ENCODE measurements at regions of chrX and their contacts with region 1.

Region 1: GRCh38 chrX:12946838-12947544 is 27.9 kb upstream of the TMSB4X start:
- DNase-seq: peak; percentile 92
- H3K4me3 Mint-ChIP-seq: peak overlapping the region; percentile 66
- H3K27ac Mint-ChIP-seq: peak overlapping the region; percentile 96
- H3K4me1 Mint-ChIP-seq: peaks cover 48% of the 10 kb centered on the region
- H3K27me3 Mint-ChIP-seq: no peaks in the 10 kb centered on the region

Region 2: DNA sequence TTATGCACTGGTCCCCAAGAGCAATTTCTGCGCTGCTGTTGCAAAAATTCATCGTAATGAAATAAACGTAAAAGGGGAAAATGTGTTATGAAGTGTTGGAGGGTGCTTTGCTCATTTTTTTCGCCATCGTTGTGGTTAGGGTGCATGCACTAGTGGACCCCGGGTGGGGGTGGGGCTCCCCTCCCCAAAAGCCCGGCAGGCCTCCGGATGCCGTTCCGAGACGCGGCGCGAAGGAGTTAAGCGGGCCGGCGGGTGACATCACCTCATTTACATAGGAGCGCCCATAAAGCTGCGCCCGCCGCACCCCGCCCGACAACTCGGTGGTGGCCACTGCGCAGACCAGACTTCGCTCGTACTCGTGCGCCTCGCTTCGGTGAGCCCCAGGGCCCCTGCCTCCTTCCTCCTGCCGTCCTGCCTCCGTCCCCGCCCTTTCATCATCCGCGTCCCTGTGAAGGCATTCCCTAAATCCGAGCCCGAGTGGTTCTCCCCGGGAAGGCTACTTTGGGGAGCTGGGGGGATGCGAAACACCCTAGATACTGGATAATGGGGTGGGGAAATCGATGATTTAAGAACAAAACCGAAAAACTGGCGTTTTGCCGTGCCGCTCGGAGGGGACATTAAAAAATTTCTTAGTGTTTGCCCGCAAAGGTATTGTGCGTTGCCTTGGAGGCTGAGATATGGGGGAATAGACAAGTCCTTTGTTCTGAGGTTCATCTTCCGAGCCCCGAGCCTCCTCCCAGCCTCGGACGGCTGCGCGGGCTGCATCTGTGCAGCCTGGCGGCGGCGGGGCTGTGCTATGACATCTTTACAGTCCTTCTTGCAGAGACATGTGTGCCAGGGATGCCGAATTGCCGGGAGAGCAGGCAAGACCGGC is 28.0 kb after region 1 on chrX and contains the start of gene TMSB4X:
- intact Hi-C with region 1: loop called (anchors 1 kb)
- DNase-seq: peak; percentile 96
- H3K4me3 Mint-ChIP-seq: peak within 1 kb of the TSS; percentile 97
- H3K27ac Mint-ChIP-seq: peak within 1 kb of the TSS; percentile 98
- H3K4me1 Mint-ChIP-seq: peaks cover 32% of the 10 kb centered on the region
- H3K27me3 Mint-ChIP-seq: no peaks in the 10 kb centered on the region
- total RNA-seq, gene TMSB4X: 5,263 and 5,311 TPM in 2 replicates

Region 3: GRCh38 chrX:13000301-13000811 is 53.4 kb after region 1 on chrX:
- intact Hi-C with region 1: loop called (anchors 2 kb)
- DNase-seq: peak; percentile 78
- H3K4me3 Mint-ChIP-seq: peak overlapping the region; percentile 75
- H3K27ac Mint-ChIP-seq: peak overlapping the region; percentile 95
- H3K4me1 Mint-ChIP-seq: peaks cover 55% of the 10 kb centered on the region
- H3K27me3 Mint-ChIP-seq: no peaks in the 10 kb centered on the region

Region 4: GRCh38 chrX:13220916-13221315 is 273.9 kb after region 1 on chrX:
- intact Hi-C with region 1: no loop called
- DNase-seq: no peak
- H3K4me3 Mint-ChIP-seq: no peak overlapping the region
- H3K27ac Mint-ChIP-seq: no peak overlapping the region
- H3K4me1 Mint-ChIP-seq: peaks cover 7% of the 10 kb centered on the region
- H3K27me3 Mint-ChIP-seq: peaks cover 4% of the 10 kb centered on the region

Region 5: DNA sequence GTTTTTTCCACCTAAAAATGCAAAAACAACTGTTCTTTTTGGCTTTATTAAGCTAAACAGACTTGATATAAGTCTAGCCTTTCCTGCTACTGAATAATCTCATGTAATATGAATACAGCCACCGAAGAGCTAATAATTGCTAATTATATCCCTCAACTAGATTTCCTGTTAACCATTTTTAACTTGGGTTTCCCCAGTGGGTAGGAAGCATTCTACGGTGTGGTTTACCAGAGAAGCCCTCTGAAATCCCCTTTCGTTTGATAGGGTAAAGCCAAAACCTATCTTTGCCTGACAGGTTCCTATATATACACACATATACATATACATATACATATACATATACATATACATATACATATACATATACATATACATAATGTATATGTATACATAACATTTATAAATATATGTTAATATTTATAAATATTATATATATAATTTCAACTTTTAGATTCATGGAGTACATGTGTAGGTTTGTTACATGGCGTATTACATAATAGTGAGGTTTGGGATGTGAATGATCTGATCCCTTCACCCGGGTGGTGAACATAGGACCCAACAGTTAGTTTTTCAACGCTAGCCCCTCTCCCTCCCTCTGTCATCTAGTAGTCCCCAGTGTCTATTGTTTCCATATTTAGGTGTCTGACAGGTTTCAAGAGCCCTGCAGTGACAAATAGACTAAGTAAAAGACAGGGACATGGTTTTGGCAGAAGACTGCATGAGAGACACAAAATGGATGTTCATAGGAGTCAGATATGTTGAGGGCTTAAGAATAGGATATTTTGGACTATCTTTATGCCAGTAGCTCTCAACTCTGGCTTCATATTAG is 310.4 kb after region 1 on chrX:
- intact Hi-C with region 1: loop called (anchors 1 kb)
- DNase-seq: peak; percentile 60
- H3K4me3 Mint-ChIP-seq: peak overlapping the region; percentile 40
- H3K27ac Mint-ChIP-seq: peak overlapping the region; percentile 53
- H3K4me1 Mint-ChIP-seq: peaks cover 39% of the 10 kb centered on the region
- H3K27me3 Mint-ChIP-seq: no peaks in the 10 kb centered on the region

Region 6: DNA sequence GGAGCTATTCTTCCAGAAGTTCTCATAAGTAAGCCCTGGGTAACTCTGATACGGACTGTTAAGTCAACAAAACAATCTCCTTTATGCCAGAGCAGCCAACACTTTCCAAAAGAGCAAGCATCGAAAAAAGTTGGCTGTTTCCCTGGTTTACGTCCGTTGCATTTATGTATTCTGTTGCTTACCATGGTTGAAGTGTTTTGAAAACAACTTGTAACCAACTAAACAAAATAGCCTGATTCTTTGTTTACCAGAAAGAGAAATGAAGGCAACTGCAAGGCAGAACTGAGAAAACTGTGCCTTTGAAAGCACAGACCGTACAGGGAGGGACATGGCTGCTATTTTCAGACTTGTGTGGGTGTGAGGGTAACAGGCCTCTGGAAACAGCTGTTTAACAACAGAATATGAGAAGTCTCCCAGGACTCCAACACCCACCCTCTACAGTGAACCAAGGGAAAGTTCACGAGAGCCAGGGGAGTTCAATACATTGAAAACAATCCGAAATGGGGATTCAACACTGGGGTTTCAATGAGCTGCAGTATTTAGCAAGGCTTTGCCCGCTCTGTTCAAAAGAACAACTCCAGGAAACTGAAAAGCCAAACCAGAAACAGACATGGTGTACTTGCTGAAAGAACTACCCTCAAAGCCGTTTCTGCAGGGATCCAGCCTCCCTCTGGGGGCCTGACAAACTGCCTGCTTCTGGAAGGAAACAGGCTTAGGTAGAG is 526.6 kb after region 1 on chrX:
- intact Hi-C with region 1: loop called (anchors 5 kb)
- DNase-seq: peak; percentile 71
- H3K4me3 Mint-ChIP-seq: peak overlapping the region; percentile 78
- H3K27ac Mint-ChIP-seq: peak overlapping the region; percentile 90
- H3K4me1 Mint-ChIP-seq: peaks cover 24% of the 10 kb centered on the region
- H3K27me3 Mint-ChIP-seq: no peaks in the 10 kb centered on the region

Region 7: DNA sequence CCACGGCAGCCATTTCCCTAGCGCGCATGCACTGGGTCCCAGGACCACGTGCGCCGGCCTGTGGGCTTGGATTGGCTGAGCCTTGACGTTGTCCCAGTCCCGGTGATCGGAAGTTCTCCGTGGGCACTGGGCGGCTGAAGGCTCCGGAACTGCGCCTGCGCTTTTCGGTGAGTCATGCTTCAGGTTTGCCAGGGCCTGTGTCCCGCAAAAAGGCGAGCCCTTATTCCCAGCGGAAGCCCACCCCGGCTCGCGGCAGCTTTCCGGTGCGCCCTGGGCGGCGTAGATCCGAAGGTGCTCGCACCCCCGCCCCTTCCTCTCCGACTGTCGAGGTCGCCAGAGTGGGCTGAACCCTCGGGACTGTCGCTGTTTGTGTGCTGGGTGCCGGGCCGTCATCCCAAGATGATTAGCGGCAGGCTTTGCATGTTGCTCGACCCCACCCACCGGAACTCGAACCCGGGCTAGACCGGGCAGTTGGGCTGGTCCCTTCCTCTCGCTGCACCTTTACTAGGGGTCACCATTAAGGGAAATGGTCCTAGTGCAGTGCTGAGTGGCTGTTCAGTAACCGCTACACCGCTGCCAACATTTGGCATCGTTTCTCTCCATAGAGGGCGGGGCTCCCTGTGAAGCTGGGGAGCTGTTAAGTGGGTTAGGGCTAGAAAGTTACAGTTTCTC is 706.2 kb after region 1 on chrX and contains the start of gene TCEANC:
- intact Hi-C with region 1: loop called (anchors 1 kb)
- DNase-seq: peak; percentile 97
- H3K4me3 Mint-ChIP-seq: peak within 1 kb of the TSS; percentile 90
- H3K27ac Mint-ChIP-seq: peak within 1 kb of the TSS; percentile 94
- H3K4me1 Mint-ChIP-seq: peaks cover 13% of the 10 kb centered on the region
- H3K27me3 Mint-ChIP-seq: no peaks in the 10 kb centered on the region
- total RNA-seq, gene TCEANC: 3.0 and 4.2 TPM in 2 replicates

Measured in activated CD4-positive, alpha-beta T cell treated with anti-CD3 and anti-CD28 coated beads, Interleukin-2, amount 10 ng/mL, durations not matched to agents 24 days and 14 days (primary cell).